Heart right ventricle (tissue), 16 donors: ENCODE measurements at regions of chr3 and their contacts with region 1.

Region 1: DNA sequence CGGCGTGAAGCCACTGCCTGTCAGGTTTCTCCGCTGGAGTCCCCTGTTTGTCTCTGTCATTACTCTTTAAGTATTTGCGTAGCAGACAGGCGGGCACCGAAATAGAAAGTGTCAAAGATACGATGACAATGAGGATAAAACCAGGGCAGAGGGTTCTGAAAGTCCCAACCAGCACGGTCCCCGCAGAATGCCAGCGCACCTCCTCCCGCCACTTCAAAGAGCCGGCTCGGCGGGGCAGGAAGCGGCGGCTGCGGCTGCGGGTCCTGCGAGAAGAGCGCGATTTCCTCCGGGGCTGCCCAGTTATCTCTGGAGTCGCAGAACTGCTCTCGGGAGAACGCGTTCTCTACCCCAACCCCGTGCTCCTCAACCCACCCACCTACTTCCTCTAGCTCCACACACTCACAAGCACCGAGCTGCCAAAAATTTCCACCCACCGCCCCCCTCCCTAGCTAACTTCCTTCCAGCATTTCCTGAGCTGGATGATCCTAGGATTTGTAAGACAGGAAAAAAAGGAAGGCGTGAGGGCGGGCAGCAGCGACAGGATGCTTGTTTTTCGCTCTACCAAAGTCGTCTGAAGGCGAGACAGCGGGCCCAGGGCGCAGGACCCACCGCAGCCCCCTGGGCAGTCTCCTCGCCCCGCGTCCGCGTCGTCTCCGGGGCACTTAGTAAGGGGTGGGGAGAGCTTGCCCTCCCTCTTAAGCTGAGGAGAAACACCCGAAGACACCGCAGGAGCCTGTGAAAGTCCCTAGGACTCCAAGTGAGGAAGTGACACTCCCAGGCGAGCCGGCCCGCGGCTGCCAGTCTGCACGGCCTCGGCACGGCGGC is at the start of gene ARHGAP31:
- DNase-seq: peak; percentile 78 to 86
- ATAC-seq: peak; percentile 72 to 87 (median 82)
- H3K4me3 ChIP-seq: peak within 1 kb of the TSS; percentile 63 to 97 (median 87)
- H3K27ac ChIP-seq: peak within 1 kb of the TSS; percentile 96 to 100 (median 99)
- H3K4me1 ChIP-seq: peaks cover 18 to 54% (median 46%) of the 10 kb centered on the region in 9 donors
- H3K27me3 ChIP-seq: no peaks in the 10 kb centered on the region
- CTCF ChIP-seq: no peak
- total RNA-seq, gene ARHGAP31: 30.4 to 71.1 (median 37.2) TPM

Region 2: GRCh38 chr3:118977671-118978392 is 316.3 kb before region 1 on chr3:
- intact Hi-C with region 1: no loop called
- DNase-seq: no peak
- ATAC-seq: no peak
- H3K4me3 ChIP-seq: no peak overlapping the region
- H3K27ac ChIP-seq: no peak overlapping the region
- H3K4me1 ChIP-seq: peaks cover 0 to 7% (median 0%) of the 10 kb centered on the region in 9 donors
- H3K27me3 ChIP-seq: no peaks in the 10 kb centered on the region
- CTCF ChIP-seq: no peak

Region 3: DNA sequence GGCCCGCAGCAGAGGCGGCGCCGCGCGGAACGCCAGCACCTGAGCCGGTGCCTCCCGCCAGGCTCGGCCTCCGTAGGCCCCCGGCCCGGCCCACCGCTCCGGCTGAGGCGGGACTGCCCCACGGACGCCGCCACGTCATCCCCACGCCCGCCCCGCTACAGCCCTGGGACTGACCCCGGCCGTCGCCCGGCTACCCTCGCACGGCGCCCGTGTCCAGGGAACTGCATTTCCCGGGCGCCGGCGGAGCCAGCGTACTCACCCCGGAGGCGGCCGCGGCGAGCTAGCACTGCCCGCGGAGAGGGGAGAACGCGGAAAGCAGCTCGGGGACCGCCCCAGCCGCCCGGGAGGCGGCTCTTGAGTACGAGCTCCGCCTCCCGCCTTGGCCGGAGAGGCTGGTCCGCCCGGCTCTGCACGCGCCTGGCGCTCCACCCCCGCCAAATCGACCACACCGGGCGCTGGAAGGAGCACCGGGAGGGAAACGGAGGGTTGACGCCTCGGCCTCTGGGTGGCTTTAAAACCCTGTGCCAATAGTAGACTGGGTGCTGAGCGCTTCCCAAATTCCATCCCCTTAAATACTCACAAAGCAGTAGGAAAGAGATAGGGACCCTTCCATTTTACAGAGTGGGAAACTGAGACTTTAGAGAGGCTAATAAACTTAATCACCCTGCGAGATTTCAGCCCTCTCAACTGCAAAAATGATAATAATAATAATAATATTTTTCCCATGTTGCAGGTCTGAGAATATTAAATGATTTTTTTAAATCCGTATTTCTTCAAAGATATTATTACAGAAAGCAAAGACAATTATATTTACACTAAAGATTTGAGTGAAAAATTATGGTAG is 53.3 kb before region 1 on chr3 and contains the start of gene B4GALT4:
- intact Hi-C with region 1: loop called in 1 of 10 experiments (anchors 2 kb)
- DNase-seq: peak; percentile 86 to 89
- ATAC-seq: peak; percentile 95 to 97 (median 96)
- H3K4me3 ChIP-seq: peak within 1 kb of the TSS; percentile 57 to 90 (median 86)
- H3K27ac ChIP-seq: peak within 1 kb of the TSS; percentile 90 to 98 (median 93)
- H3K4me1 ChIP-seq: peaks cover 3 to 50% (median 34%) of the 10 kb centered on the region in 9 donors
- H3K27me3 ChIP-seq: no peaks in the 10 kb centered on the region
- CTCF ChIP-seq: no peak
- total RNA-seq, gene B4GALT4: 9.0 to 14.6 (median 11.6) TPM

Region 4: GRCh38 chr3:119322835-119323722 is 29.0 kb after region 1 on chr3:
- intact Hi-C with region 1: loop called in 1 of 10 experiments (anchors 1 kb)
- DNase-seq: peak; percentile 89 to 90
- ATAC-seq: peak; percentile 92 to 96 (median 94)
- H3K4me3 ChIP-seq: peak overlapping the region; percentile 1 to 71 (median 62)
- H3K27ac ChIP-seq: peak overlapping the region; percentile 46 to 97 (median 94)
- H3K4me1 ChIP-seq: peaks cover 2 to 98% (median 62%) of the 10 kb centered on the region in 9 donors
- H3K27me3 ChIP-seq: no peaks in the 10 kb centered on the region
- CTCF ChIP-seq: peak in 5 of 9 donors; percentile 3 to 54 (median 42)

Region 5: GRCh38 chr3:119331661-119332060 is 37.6 kb after region 1 on chr3:
- intact Hi-C with region 1: loop called in 4 of 10 experiments (anchors 2 to 5 kb)
- DNase-seq: no peak
- ATAC-seq: peak in 4 of 8 donors; percentile 21 to 40 (median 28)
- H3K4me3 ChIP-seq: no peak overlapping the region
- H3K27ac ChIP-seq: peak overlapping the region in 8 of 10 donors; percentile 27 to 71 (median 52)
- H3K4me1 ChIP-seq: peaks cover 9 to 83% (median 46%) of the 10 kb centered on the region in 9 donors
- H3K27me3 ChIP-seq: no peaks in the 10 kb centered on the region
- CTCF ChIP-seq: no peak

Region 6: GRCh38 chr3:119352849-119353502 is 58.9 kb after region 1 on chr3:
- intact Hi-C with region 1: loop called in 3 of 10 experiments (anchors 5 to 10 kb)
- DNase-seq: peak in 1 of 2 donors; percentile 20
- ATAC-seq: peak in 7 of 8 donors; percentile 47 to 72 (median 65)
- H3K4me3 ChIP-seq: no peak overlapping the region
- H3K27ac ChIP-seq: peak overlapping the region in 8 of 10 donors; percentile 6 to 86 (median 62)
- H3K4me1 ChIP-seq: peaks cover 6 to 80% (median 76%) of the 10 kb centered on the region in 9 donors
- H3K27me3 ChIP-seq: no peaks in the 10 kb centered on the region
- CTCF ChIP-seq: peak; percentile 16 to 63 (median 43)

Region 7: DNA sequence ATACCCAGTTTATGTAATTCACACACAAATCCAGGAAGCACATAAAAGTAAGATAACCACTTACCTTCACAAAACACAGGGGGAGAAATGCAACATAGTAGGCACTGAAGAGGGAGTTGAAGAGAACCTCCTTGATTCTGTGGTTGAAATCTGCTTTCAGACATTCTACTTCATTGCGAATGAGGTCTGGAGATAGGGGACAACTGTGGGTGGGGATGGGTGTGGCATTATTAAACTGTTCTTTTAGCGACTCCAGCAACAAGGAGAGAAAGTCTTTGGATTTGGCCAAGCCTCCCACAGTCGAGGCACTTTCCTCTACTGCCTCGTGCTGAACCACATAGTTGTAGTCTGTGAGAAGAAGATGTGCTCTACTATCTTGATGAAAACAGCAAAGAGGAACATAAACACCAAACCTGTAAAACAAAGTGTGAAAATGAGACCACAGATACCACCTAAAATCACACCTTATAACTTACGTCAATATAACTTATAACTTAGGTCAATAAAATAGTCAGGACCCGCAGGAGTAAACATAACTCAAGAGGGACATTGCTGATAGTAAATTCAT is 143.7 kb after region 1 on chr3:
- intact Hi-C with region 1: no loop called
- DNase-seq: no peak
- ATAC-seq: no peak
- H3K4me3 ChIP-seq: no peak overlapping the region
- H3K27ac ChIP-seq: no peak overlapping the region
- H3K4me1 ChIP-seq: peaks cover 0 to 15% (median 6%) of the 10 kb centered on the region in 9 donors
- H3K27me3 ChIP-seq: no peaks in the 10 kb centered on the region
- CTCF ChIP-seq: no peak

Region 8: GRCh38 chr3:119463171-119464169 is 169.4 kb after region 1 on chr3 and contains the start of gene TMEM39A:
- intact Hi-C with region 1: loop called in 1 of 10 experiments (anchors 10 kb)
- DNase-seq: peak; percentile 100
- ATAC-seq: peak; percentile 97 to 99 (median 99)
- H3K4me3 ChIP-seq: peak within 1 kb of the TSS; percentile 63 to 94 (median 78)
- H3K27ac ChIP-seq: peak within 1 kb of the TSS; percentile 53 to 93 (median 80)
- H3K4me1 ChIP-seq: peaks cover 0 to 56% (median 26%) of the 10 kb centered on the region in 9 donors
- H3K27me3 ChIP-seq: no peaks in the 10 kb centered on the region
- CTCF ChIP-seq: peak in 4 of 9 donors; percentile 5 to 34 (median 18)
- total RNA-seq, gene TMEM39A: 9.7 to 25.8 (median 13.5) TPM